ENCODE measurements at regions of chr7 and their contacts with region 1.

Region 1: GRCh38 chr7:49776994-49777393 is 3.6 kb downstream of the VWC2 start:
- DNase-seq: peak in 3 of 5 donors; percentile 26 to 52 (median 43)
- ATAC-seq: peak in 2 of 4 donors; percentile 8 to 20
- H3K4me3 ChIP-seq: peak overlapping the region in 3 of 12 donors; percentile 66 to 83 (median 70)
- H3K27ac ChIP-seq: peak overlapping the region in 9 of 12 donors; percentile 21 to 96 (median 88)
- H3K4me1 ChIP-seq: peaks cover 0 to 58% (median 6%) of the 10 kb centered on the region in 12 donors
- H3K27me3 ChIP-seq: peaks cover 0 to 50% (median 4%) of the 10 kb centered on the region in 9 donors
- CTCF ChIP-seq: peak; percentile 10 to 56 (median 36)
- POLR2A ChIP-seq: no peak

Region 2: DNA sequence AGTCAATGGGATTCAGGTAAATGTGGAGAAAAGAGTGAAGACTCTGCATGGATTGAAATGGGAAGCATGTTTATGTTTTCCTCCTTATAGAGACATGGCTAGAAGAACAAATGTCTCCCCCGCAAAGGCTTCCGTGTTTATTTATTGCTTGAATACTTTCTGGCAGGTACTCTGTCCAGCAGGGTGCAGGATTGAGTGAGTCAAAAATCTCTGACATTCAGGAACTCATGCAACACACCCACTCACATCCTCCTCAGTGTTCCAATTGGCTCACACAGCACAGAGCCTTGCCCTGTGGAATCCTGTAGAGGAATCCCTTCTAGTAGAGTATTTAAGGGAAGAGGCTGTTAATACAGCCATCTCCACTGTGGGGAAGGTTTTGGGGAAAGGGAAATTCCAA is 293.9 kb before region 1 on chr7:
- intact Hi-C with region 1: loop called in 2 of 10 experiments (anchors 5 kb)
- DNase-seq: peak in 3 of 5 donors; percentile 10 to 42 (median 28)
- ATAC-seq: peak in 3 of 4 donors; percentile 58 to 89 (median 86)
- H3K4me3 ChIP-seq: no peak overlapping the region
- H3K27ac ChIP-seq: no peak overlapping the region
- H3K4me1 ChIP-seq: peaks cover 0 to 6% (median 0%) of the 10 kb centered on the region in 12 donors
- H3K27me3 ChIP-seq: no peaks in the 10 kb centered on the region
- CTCF ChIP-seq: peak in 9 of 12 donors; percentile 25 to 45 (median 35)
- POLR2A ChIP-seq: no peak

Region 3: DNA sequence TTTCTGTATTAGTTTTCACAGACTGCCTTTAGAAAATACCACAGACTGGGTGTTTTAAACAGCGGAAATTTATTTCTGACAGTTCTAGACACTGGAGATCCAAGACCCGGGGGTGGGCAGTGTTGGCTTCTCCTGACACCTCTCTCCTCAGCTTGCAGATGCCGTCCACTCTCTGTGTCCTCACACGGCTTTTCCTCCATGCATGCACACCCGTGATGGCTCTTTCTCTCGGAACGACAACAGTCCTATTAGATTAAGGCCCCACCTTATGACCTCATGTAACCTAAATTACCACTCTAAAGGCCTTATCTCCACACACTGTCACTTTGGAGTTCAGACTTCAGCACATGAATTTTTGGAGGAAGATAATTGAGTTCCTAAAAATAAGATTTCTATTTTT is 146.5 kb before region 1 on chr7:
- intact Hi-C with region 1: loop called in 6 of 10 experiments (anchors 1 to 10 kb)
- DNase-seq: peak in 4 of 5 donors; percentile 38 to 61 (median 56)
- ATAC-seq: peak; percentile 94 to 98 (median 96)
- H3K4me3 ChIP-seq: no peak overlapping the region
- H3K27ac ChIP-seq: peak overlapping the region in 11 of 12 donors; percentile 54 to 94 (median 76)
- H3K4me1 ChIP-seq: peaks cover 0 to 41% (median 10%) of the 10 kb centered on the region in 12 donors
- H3K27me3 ChIP-seq: no peaks in the 10 kb centered on the region
- CTCF ChIP-seq: no peak
- POLR2A ChIP-seq: no peak

Region 4: DNA sequence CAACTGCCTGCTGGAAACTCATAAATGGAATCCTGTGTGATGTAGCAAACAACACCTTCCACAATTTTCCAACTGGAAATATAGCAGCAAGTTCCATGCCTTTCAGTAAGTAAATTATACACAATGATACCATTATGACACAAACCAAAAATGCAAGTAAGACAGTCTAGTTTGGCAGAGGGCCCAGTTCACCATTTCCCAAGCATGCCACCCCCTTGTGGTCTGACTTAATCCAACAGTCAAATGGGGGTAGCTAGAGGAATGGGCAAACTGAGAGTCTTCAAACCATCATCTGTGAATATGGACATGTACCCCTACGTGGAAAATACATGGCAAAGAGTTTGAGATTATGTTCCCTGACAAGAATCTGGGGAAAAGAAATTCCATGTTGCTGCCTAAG is 141.2 kb before region 1 on chr7:
- intact Hi-C with region 1: loop called in 7 of 10 experiments (anchors 1 to 10 kb)
- DNase-seq: no peak
- ATAC-seq: no peak
- H3K4me3 ChIP-seq: no peak overlapping the region
- H3K27ac ChIP-seq: no peak overlapping the region
- H3K4me1 ChIP-seq: peaks cover 0 to 16% (median 9%) of the 10 kb centered on the region in 12 donors
- H3K27me3 ChIP-seq: no peaks in the 10 kb centered on the region
- CTCF ChIP-seq: peak in 8 of 12 donors; percentile 4 to 37 (median 15)
- POLR2A ChIP-seq: no peak

Region 5: DNA sequence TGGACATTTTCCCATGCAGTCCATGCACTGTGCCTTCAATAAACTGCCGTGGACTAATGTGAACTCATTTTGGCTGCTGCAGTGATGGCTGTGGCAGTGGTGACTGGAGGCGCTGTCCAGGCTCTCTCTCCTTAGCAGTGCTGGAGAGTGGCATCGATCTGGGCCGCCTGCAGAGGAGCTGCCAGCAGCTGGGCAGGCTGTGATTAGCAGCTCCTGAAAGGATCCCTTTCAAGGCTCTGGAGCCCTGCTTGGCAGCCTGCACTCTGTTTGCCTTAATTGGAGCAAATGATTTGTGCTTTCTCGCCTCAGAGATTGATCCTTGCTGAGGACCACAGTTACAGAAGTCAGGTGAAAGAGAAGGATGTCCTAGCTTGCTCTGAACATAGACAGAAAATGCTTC is 133.7 kb before region 1 on chr7:
- intact Hi-C with region 1: loop called in 5 of 10 experiments (anchors 5 to 10 kb)
- DNase-seq: peak; percentile 32 to 68 (median 59)
- ATAC-seq: peak; percentile 87 to 98 (median 94)
- H3K4me3 ChIP-seq: no peak overlapping the region
- H3K27ac ChIP-seq: no peak overlapping the region
- H3K4me1 ChIP-seq: peaks cover 0 to 17% (median 0%) of the 10 kb centered on the region in 12 donors
- H3K27me3 ChIP-seq: no peaks in the 10 kb centered on the region
- CTCF ChIP-seq: no peak
- POLR2A ChIP-seq: no peak

Region 6: DNA sequence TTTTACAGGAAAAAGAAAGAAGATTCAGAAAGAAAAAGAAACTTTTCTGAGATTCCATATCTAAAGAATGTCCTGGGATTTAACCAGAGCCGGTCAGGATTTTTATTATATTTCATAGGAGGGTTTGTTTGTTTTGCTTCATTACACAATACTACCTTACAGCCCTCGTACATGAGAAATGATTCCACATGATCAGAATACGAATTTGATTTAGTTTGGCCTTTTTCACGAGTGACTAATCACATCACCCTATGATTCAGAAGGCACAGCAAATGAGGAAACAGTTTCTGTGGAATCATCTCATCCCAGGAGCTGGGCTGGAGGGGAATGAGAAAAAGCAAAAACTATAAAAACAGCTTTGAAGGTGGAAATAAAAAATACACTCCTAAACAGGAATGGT is 58.2 kb before region 1 on chr7:
- intact Hi-C with region 1: loop called in 2 of 10 experiments (anchors 5 to 10 kb)
- DNase-seq: no peak
- ATAC-seq: no peak
- H3K4me3 ChIP-seq: no peak overlapping the region
- H3K27ac ChIP-seq: no peak overlapping the region
- H3K4me1 ChIP-seq: peaks cover 0 to 4% (median 0%) of the 10 kb centered on the region in 12 donors
- H3K27me3 ChIP-seq: no peaks in the 10 kb centered on the region
- CTCF ChIP-seq: no peak
- POLR2A ChIP-seq: no peak

Measured in heart left ventricle (tissue), 16 donors.